Activated CD4-positive, alpha-beta T cell treated with anti-CD3 and anti-CD28 coated beads for 36 hours (primary cell): ENCODE measurements at regions of chr11 and their contacts with region 1.

Region 1: GRCh38 chr11:112024773-112025678 is at the start of gene DLAT:
- DNase-seq: peak; percentile 93
- ATAC-seq: peak; percentile 90
- H3K4me3 Mint-ChIP-seq: peak within 1 kb of the TSS; percentile 96
- H3K27ac Mint-ChIP-seq: peak within 1 kb of the TSS; percentile 100
- H3K4me1 Mint-ChIP-seq: peaks cover 19% of the 10 kb centered on the region
- H3K27me3 Mint-ChIP-seq: no peaks in the 10 kb centered on the region
- total RNA-seq, gene DLAT: 47.8 to 49.1 TPM

Region 2: DNA sequence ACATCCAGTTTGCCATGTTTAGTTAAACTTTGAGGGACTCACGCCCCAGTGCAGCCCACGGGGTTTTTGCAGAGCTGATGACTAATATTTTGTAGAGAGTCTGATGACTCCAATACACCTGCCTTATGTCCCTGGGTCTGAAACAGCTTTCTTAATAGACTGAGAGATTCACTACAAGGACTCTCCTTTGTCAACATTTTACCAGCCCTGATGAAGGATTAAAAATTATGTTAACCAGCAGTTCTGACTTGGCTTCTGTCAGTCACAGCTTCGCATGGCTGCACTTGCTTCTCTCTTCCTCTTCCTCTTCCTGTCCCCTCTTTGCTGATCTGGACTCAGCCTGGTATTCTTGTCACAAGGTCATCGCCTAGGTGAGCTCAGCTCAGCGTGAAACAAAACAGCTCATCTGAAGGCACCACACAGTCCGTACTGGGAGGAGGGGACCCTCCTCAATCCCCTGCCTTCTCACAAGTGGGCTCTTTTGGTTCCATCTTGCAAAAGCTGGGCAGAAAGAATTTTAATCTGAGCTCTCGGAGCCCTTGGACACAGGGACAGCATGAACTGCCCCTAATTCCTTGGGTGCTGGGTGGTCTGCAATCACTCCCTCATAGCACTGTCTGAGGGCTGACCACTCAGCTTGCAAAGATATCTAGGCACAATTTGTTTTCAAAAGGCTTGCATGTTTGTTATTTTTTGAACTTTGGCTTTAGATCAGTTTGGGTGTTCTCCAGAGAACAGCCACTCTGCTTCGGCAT is 607.8 kb before region 1 on chr11:
- CTCF ChIA-PET with region 1: no interaction called
- POLR2A ChIA-PET with region 1: no interaction called
- intact Hi-C with region 1: no loop called
- DNase-seq: peak; percentile 60
- ATAC-seq: peak; percentile 49
- H3K4me3 Mint-ChIP-seq: no peak overlapping the region
- H3K27ac Mint-ChIP-seq: peak overlapping the region; percentile 49
- H3K4me1 Mint-ChIP-seq: peaks cover 51% of the 10 kb centered on the region
- H3K27me3 Mint-ChIP-seq: no peaks in the 10 kb centered on the region

Region 3: DNA sequence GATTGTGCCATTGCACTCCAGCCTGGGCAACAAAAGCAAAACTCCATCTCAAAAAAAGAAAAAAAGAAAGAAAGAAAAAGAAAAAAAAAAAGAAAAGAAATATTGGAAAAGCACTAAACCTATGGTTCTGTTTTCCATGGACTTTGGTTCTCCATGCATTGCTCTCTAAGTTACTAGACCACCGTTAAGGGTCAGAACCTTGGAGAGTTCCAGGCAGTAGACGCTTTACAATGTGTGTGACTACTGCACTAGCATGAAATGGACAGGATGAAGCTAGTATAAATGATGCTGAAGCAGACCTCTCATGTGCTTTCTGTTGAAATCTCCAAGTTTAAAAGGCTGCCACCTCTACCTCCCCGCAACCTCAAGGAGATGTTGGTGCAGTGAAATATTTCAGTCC is 359.2 kb before region 1 on chr11:
- CTCF ChIA-PET with region 1: no interaction called
- POLR2A ChIA-PET with region 1: no interaction called
- intact Hi-C with region 1: no loop called
- DNase-seq: peak; percentile 9
- ATAC-seq: no peak
- H3K4me3 Mint-ChIP-seq: no peak overlapping the region
- H3K27ac Mint-ChIP-seq: no peak overlapping the region
- H3K4me1 Mint-ChIP-seq: peaks cover 6% of the 10 kb centered on the region
- H3K27me3 Mint-ChIP-seq: no peaks in the 10 kb centered on the region

Region 4: DNA sequence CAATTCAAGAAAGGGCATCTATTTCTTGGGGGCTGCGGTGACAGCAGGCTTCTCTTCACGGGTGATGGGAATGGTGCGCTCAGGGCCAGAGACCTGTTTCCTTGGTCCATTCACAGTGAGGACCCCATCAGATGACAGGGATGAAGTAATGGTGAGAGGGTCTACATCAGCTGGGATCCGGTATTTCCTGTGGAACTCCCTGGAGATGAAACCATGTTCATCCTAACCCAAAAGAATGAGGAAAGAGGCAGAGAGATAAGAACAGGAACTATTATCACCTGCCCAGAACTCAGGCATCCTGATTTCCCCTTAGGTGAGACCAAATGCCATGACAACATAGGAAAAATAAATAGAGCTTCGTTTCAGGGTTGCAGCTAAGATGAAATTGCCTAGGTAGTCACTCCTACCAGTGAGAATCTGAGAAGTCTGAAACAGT is 116.3 kb before region 1 on chr11:
- CTCF ChIA-PET with region 1: interaction called, 3 read pairs
- POLR2A ChIA-PET with region 1: interaction called, 11 read pairs
- intact Hi-C with region 1: no loop called
- DNase-seq: no peak
- ATAC-seq: no peak
- H3K4me3 Mint-ChIP-seq: no peak overlapping the region
- H3K27ac Mint-ChIP-seq: no peak overlapping the region
- H3K4me1 Mint-ChIP-seq: no peaks in the 10 kb centered on the region
- H3K27me3 Mint-ChIP-seq: peaks cover 19% of the 10 kb centered on the region

Region 5: DNA sequence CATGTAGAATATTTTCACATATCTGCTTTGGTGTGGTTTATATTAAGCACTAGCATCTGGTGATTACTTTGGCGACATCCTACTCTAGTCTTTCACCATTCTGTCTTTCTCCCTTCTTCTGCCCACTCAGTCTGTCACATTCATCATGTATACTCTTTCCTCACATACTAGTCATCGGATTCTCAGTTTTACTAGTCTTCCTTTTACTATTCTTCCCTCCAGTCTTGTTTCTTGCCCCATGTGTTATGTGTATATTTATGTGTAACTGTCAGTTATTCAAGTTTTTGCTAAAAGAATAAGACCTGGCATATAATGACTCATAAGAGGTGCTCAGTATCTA is 92.4 kb before region 1 on chr11:
- CTCF ChIA-PET with region 1: interaction called, 4 read pairs
- POLR2A ChIA-PET with region 1: no interaction called
- intact Hi-C with region 1: loop called (anchors 1 to 2 kb)
- DNase-seq: no peak
- ATAC-seq: peak; percentile 73
- H3K4me3 Mint-ChIP-seq: peak overlapping the region; percentile 28
- H3K27ac Mint-ChIP-seq: peak overlapping the region; percentile 88
- H3K4me1 Mint-ChIP-seq: peaks cover 40% of the 10 kb centered on the region
- H3K27me3 Mint-ChIP-seq: no peaks in the 10 kb centered on the region

Region 6: GRCh38 chr11:111938687-111939160 is 86.3 kb before region 1 on chr11:
- CTCF ChIA-PET with region 1: interaction called, 4 read pairs
- POLR2A ChIA-PET with region 1: no interaction called
- intact Hi-C with region 1: loop called in 1 of 2 experiments (anchors 2 kb)
- DNase-seq: peak; percentile 66
- ATAC-seq: peak; percentile 89
- H3K4me3 Mint-ChIP-seq: peak overlapping the region; percentile 73
- H3K27ac Mint-ChIP-seq: peak overlapping the region; percentile 93
- H3K4me1 Mint-ChIP-seq: peaks cover 51% of the 10 kb centered on the region
- H3K27me3 Mint-ChIP-seq: no peaks in the 10 kb centered on the region

Region 7: DNA sequence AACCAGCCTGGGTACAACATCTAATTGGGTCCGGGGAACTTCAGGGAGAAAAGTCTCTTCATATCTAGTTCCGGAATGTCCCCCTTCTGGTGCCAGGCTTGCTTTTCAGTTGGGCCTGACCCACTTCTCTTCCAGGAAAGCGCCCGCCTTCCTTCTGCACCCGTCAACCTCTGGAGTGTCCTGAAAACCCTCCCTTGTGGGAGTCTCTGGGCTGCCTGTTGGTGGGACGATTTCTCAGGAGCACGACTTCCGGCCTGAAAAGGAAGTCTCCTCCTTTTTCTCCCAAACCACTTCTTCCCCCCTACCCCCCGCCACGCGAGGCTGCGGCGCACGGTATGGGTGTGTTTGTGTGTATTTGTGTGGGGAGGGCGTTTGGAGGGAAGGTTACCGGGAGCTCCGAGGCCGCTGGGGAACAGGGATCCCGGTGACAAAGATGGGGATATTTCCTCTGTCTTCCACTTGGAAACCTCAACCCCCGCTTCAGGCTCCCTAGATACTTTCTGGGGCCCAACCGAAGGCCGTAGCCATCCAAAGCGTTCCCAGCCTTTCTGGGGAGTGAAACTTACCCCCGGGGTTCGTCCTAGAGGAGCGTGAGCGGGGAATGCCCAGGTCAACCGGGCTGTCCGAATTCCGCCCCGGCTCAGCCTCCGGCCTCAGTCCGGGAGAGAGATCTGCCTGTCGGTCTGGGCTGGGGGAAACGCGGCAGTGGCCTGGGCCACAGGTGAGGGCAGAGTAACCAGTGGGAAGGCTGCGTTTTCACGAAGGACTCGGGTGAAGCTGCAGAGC is 49.2 kb after region 1 on chr11 and contains the start of gene NKAPD1:
- CTCF ChIA-PET with region 1: no interaction called
- POLR2A ChIA-PET with region 1: no interaction called
- intact Hi-C with region 1: loop called (anchors 1 to 5 kb)
- DNase-seq: peak; percentile 86
- ATAC-seq: peak; percentile 92
- H3K4me3 Mint-ChIP-seq: peak within 1 kb of the TSS; percentile 94
- H3K27ac Mint-ChIP-seq: peak within 1 kb of the TSS; percentile 93
- H3K4me1 Mint-ChIP-seq: peaks cover 26% of the 10 kb centered on the region
- H3K27me3 Mint-ChIP-seq: peaks cover 11% of the 10 kb centered on the region
- total RNA-seq, gene NKAPD1: 23.7 to 45.3 TPM

Region 8: DNA sequence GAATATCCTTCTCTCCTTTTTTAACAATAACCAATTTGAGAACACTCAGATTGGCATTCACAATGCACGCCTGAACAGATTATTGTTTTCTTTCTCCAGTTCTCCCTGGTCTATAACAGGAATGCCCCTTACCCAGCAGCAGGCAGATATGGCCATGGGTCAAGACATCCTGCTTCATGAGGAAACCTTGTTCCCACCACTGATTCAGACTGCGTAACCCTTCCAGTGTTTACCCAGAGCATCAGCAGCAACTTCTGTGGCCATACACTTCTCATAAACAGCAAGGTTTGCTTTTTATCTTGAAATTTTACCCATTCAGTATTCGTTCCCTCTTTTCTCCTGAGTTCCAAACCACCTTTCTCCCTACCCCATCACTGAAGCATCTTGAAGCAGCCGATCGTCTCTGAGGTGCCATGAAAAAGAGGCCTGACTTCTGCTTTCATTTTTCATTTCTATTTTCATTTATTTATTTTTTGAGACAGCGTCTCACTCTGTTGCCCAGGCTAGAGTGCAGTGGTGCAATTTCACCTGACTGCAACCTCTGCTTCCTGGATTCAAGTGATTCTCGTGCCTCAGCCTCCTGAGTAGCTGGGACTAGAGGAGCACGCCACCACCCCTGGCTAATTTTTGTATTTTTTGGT is 210.8 kb after region 1 on chr11:
- CTCF ChIA-PET with region 1: no interaction called
- POLR2A ChIA-PET with region 1: no interaction called
- intact Hi-C with region 1: no loop called
- DNase-seq: no peak
- ATAC-seq: no peak
- H3K4me3 Mint-ChIP-seq: no peak overlapping the region
- H3K27ac Mint-ChIP-seq: no peak overlapping the region
- H3K4me1 Mint-ChIP-seq: no peaks in the 10 kb centered on the region
- H3K27me3 Mint-ChIP-seq: no peaks in the 10 kb centered on the region